Activated CD8-positive, alpha-beta memory T cell treated with anti-CD3 and anti-CD28 coated beads, Interleukin-2, amount 10 ng/mL, durations not matched to agents 7 days and 5 days (primary cell): ENCODE measurements at regions of chr7 and their contacts with region 1.

Region 1: DNA sequence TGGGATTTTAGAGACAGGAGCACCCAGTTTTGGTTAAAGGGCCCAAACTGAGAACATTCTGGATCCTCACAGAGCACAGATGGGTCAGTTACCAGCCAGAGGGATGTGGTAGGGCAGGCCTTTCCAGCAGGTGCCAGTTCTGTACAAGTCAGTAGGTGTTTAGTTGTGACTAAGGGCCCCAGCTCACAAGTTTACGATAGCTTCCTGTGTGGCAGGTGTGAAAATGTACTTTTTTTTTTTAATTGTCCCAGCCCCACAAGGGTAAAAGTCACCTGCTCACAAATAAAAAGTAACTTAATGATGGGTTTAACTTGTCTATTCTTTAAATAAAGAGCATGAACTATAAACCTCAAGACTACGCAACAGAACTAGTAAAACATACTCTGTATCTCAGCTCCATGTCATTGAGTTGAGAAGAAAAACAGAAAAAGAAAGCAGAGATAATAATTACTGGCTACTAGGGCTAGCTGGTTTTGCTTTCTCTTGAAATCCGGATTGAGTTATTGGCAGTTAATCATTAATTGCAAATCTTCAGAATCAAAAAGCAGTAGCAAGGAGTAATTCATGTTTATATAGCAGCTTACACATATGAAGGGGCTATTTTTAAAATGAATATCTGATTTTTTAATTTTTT is 15.4 kb downstream of the NFE2L3 start:
- DNase-seq: peak; percentile 70
- ATAC-seq: peak; percentile 93
- H3K4me3 Mint-ChIP-seq: peak overlapping the region; percentile 13
- H3K27ac Mint-ChIP-seq: peak overlapping the region; percentile 86
- H3K4me1 Mint-ChIP-seq: peaks cover 48% of the 10 kb centered on the region
- H3K27me3 Mint-ChIP-seq: no peaks in the 10 kb centered on the region

Region 2: DNA sequence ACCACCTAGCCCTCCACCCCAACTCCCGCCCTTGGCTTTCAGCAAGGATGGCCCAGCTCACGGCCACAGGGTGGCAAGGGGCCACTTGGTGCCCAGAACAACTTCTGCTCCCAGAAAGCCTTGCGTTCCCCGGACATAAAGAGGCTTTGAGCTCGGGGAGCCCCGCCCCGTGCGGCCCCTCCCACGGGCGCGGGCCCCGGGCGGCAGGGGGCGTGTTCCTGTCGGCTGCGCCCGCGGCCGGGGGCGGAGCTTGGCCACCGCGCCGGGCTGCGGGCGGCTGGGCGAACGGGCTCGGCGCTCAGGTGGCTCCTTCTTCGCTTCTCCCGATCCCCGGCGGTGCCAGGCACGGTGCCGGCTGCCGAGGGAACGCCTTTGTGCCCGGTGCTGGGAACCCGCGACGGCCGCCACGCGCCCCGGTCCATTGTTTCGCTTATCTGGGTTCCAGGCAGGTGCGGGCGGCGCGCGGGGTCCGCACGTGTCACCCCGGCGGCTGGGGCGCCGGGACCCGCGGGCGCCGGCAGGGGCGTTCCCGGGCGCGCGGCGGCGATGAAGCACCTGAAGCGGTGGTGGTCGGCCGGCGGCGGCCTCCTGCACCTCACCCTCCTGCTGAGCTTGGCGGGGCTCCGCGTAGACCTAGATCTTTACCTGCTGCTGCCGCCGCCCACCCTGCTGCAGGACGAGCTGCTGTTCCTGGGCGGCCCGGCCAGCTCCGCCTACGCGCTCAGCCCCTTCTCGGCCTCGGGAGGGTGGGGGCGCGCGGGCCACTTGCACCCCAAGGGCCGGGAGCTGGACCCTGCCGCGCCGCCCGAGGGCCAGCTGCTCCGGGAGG is 15.3 kb before region 1 on chr7 and contains the start of gene NFE2L3:
- CTCF ChIA-PET with region 1: interaction called, 10 read pairs
- DNase-seq: peak; percentile 89
- ATAC-seq: peak; percentile 77
- H3K4me3 Mint-ChIP-seq: peak within 1 kb of the TSS; percentile 89
- H3K27ac Mint-ChIP-seq: peak within 1 kb of the TSS; percentile 99
- H3K4me1 Mint-ChIP-seq: peaks cover 52% of the 10 kb centered on the region
- H3K27me3 Mint-ChIP-seq: no peaks in the 10 kb centered on the region
- total RNA-seq, gene NFE2L3: 20.1 to 44.4 TPM

Region 3: GRCh38 chr7:26265065-26265464 is 97.6 kb after region 1 on chr7:
- CTCF ChIA-PET with region 1: no interaction called
- DNase-seq: no peak
- ATAC-seq: no peak
- H3K4me3 Mint-ChIP-seq: no peak overlapping the region
- H3K27ac Mint-ChIP-seq: no peak overlapping the region
- H3K4me1 Mint-ChIP-seq: peaks cover 13% of the 10 kb centered on the region
- H3K27me3 Mint-ChIP-seq: peaks cover 10% of the 10 kb centered on the region

Region 4: GRCh38 chr7:26398756-26399501 is 231.5 kb after region 1 on chr7:
- CTCF ChIA-PET with region 1: no interaction called
- DNase-seq: peak; percentile 44
- ATAC-seq: peak; percentile 52
- H3K4me3 Mint-ChIP-seq: peak overlapping the region; percentile 84
- H3K27ac Mint-ChIP-seq: peak overlapping the region; percentile 64
- H3K4me1 Mint-ChIP-seq: peaks cover 12% of the 10 kb centered on the region
- H3K27me3 Mint-ChIP-seq: peaks cover 63% of the 10 kb centered on the region